OCI-LY7 (cell line): ENCODE measurements at regions of chr6 and their contacts with region 1.

Region 1: DNA sequence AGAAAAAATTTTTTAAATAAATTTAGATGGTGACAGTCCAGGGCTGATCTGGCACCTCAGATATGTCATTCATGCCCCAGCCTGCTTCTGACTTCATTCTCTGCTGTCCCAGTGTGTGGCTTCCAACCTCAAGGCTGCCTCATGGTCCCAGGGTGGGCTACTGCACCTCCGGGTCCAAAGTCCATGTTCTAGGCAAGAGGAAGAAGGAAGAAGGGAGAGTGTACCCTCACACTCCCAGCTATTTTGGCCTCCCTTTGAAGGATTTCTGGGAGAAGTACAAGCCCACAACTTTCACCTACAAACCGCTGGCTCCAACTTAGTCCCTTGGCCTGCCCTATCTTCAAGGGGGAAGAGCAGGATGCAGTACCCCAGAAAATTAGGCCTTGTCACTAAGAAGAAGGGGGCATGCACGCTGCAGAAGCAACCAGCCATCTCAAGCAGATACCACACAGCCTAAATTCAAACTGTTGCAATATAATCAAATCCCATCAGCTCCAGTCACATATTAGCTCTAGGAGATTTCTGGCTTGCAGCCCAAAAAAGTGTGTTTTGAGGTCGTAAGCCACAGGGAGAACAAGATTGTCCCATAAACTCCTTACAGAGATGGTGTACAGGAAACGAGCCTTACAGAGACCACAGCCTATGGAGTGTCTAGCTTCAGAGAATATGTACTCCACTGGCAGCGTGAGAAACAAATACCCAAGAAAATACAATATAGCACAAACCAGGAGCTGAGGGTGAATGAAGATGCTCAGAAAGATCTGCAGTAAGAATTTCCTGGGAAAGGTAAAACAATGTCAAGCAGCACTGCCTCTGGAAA is 906 bp upstream of the BTN3A2 start:
- DNase-seq: peak; percentile 52
- H3K4me3 ChIP-seq: peak overlapping the region; percentile 77
- H3K27ac ChIP-seq: peak overlapping the region; percentile 96
- H3K4me1 ChIP-seq: peaks cover 70% of the 10 kb centered on the region
- CTCF ChIP-seq: no peak

Region 2: GRCh38 chr6:26375270-26375669 is 11.2 kb after region 1 on chr6:
- CTCF ChIA-PET with region 1: no interaction called
- POLR2A ChIA-PET with region 1: interaction called, 12 read pairs
- intact Hi-C with region 1: no loop called
- DNase-seq: peak; percentile 67
- H3K4me3 ChIP-seq: peak overlapping the region; percentile 18
- H3K27ac ChIP-seq: peak overlapping the region; percentile 79
- H3K4me1 ChIP-seq: peaks cover 18% of the 10 kb centered on the region
- CTCF ChIP-seq: no peak; the same call in 1 of the 2 replicates

Region 3: DNA sequence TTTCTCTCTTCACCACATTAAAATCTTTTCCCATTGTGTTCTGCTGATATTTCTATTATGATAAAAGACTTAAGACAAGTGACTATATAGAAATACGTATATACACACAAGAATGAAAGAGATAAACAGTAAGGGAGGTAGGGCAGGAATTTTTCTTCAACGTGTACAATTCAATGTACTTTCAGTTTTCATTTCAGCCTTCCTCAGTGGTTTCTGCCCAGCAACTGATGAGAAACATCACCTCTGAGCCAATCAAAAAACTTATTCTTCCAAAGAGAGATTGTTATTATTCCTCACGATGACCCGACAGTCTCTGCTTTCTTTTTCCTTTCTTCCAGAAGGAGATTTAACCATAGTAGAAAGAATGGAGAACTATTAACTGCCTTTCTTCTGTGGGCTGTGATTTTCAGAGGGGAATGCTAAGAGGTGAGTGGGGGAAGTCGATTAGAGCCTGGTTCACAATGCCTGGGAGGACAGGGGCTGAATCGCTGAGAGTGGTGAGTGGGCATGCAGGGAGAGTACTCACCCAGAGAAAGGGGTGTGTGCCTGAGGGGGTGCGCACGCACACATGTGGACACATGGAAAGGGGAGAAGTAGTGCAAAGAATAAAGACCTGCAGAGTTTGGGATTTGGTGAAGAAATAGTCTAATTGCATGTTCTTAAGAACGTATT is 38.0 kb after region 1 on chr6 and contains the start of gene BTN3A1:
- CTCF ChIA-PET with region 1: no interaction called
- POLR2A ChIA-PET with region 1: interaction called, 5 read pairs
- intact Hi-C with region 1: loop called (anchors 2 kb)
- DNase-seq: peak; percentile 82
- H3K4me3 ChIP-seq: peak within 1 kb of the TSS; percentile 82
- H3K27ac ChIP-seq: peak within 1 kb of the TSS; percentile 64
- H3K4me1 ChIP-seq: peaks cover 54% of the 10 kb centered on the region
- CTCF ChIP-seq: no peak
- total RNA-seq, gene BTN3A1: 33.4 and 34.6 TPM in 2 replicates